ENCODE measurements at regions of chr2 and their contacts with region 1.

Region 1: GRCh38 chr2:8681786-8682692 is at the start of gene ID2:
- DNase-seq: peak; percentile 97 to 100 (median 99)

Region 2: DNA sequence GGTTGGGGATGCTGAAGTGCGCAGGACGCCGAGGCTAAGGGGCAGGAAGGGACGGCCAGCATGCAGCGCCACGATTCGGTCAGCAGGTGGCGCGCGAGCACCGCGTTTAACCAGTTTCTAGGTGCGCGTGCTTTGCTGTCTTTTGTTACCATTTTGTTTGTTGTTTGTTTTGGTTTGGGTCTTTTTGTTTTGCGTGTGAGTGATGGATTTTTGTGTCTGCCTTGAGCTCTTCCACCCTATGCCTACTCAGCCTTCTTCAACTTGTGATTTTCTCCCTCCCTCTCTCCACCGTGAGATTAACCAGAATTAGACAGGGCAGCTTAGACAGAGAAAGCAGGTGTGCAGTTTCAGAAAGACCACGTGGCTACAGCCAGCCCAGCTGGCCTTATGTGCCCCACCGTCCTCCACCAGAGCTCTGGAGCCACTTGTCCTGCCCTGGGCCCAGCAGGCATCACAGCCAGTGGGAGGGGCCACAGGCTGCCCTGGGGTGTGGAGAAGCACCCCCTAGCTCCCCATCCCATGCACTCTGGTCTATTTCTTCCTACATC is 1584.6 kb before region 1 on chr2:
- intact Hi-C with region 1: loop called (anchors 5 kb)
- DNase-seq: peak; percentile 42 to 92 (median 81)

Region 3: DNA sequence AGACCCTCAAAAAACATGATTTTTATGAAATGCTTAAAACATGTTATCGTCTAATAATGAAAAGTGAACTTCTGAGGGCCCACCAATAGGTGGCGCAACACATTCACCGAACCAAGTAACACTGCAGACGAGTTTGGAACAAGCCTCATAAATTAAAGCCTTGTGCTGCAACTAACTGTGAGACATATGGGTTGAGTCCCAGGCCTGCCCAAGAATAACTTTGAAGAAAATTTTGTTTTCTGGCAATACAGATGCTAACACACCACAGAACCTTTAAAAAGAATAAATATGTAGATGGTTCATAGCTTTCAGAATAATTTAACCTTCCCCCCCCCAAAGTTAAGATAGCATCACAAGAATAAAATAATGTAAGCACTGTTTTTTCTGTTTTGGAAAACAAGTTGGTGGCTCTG is 1479.0 kb before region 1 on chr2:
- intact Hi-C with region 1: loop called (anchors 10 kb)
- DNase-seq: peak in 40 of 42 donors; percentile 11 to 85 (median 64)

Region 4: GRCh38 chr2:7427293-7428060 is 1254.6 kb before region 1 on chr2:
- intact Hi-C with region 1: loop called (anchors 5 kb)
- DNase-seq: peak in 11 of 42 donors; percentile 10 to 70 (median 32)

Region 5: DNA sequence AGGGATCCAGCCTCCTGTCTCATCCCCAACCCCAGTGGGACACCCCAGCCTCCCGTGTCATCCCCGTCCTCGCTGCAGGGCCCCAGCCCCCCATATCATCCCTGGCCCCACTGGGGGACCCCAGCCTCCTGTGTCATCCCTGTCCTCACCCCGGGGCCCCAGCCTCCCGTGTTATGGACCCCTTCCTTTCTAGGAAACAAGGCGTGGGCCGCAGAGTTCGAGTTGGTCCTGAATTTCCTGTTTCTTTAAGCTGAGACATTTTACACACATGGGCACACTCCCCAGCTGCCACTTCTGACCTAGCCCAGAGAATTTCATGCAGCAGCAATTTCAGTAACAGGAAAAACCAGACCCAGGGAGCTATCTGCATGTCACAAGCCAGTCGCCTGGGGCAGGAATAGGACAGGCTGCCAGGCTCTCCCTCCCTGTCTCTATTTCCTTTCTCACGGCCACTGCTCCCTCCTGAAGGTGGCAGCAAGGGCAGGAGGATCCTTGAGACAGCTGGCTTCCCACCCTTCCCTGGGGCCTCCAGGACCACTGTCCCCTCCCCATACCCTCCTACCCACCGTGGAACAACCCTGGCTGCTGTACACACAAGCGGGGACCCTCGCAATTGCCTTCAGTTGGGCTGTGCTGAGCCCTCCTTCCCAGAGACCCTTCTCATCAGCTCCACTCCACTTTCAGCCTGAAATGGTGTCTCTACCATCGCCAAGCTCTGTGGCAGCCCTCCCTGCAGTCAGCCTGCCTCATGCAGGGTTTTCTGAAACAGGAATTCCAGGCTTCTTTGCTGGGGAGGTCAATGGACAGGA is 142.1 kb before region 1 on chr2:
- intact Hi-C with region 1: loop called (anchors 10 kb)
- DNase-seq: peak in 11 of 42 donors; percentile 2 to 51 (median 36)